HepG2 (cell line): ENCODE measurements at regions of chr2 and their contacts with region 1.

Region 1: GRCh38 chr2:53265544-53266299 is 501.9 kb upstream of the CHAC2 start:
- DNase-seq: no peak
- ATAC-seq: no peak
- H3K4me3 ChIP-seq: no peak overlapping the region
- H3K27ac ChIP-seq: no peak overlapping the region
- H3K4me1 ChIP-seq: no peaks in the 10 kb centered on the region
- H3K27me3 ChIP-seq: peaks cover 0 to 1% of the 10 kb centered on the region in 2 experiments; a peak in 1 of 5 replicates
- CTCF ChIP-seq: no peak
- EP300 ChIP-seq: no peak
- POLR2A ChIP-seq: no peak
- RAD21 ChIP-seq: no peak

Region 2: DNA sequence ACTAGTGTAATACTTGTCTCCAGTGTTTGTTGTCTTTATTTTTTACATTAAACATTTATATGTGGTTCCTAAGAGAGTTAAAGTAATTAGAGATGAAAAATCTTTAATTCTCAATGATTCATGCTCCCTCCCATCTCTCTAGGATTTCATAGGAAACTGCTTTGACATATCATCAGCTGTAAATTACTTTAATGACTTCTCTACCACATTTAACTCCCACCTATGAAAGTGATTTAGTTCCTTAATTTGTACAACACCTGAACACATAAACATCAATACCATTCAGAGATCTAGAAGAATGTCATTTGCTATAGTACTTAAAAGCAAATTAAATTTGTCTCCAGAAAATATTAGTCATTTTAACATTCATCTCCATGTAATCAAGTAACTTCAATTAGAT is 22.3 kb before region 1 on chr2:
- CTCF ChIA-PET with region 1: no interaction called
- POLR2A ChIA-PET with region 1: no interaction called
- in situ Hi-C with region 1: no loop called
- intact Hi-C with region 1: loop called (anchors 1 kb)
- DNase-seq: no peak
- ATAC-seq: no peak
- H3K4me3 ChIP-seq: no peak overlapping the region
- H3K27ac ChIP-seq: no peak overlapping the region
- H3K4me1 ChIP-seq: no peaks in the 10 kb centered on the region
- H3K27me3 ChIP-seq: no peaks in the 10 kb centered on the region
- CTCF ChIP-seq: no peak
- EP300 ChIP-seq: no peak
- POLR2A ChIP-seq: no peak
- RAD21 ChIP-seq: no peak

Region 3: DNA sequence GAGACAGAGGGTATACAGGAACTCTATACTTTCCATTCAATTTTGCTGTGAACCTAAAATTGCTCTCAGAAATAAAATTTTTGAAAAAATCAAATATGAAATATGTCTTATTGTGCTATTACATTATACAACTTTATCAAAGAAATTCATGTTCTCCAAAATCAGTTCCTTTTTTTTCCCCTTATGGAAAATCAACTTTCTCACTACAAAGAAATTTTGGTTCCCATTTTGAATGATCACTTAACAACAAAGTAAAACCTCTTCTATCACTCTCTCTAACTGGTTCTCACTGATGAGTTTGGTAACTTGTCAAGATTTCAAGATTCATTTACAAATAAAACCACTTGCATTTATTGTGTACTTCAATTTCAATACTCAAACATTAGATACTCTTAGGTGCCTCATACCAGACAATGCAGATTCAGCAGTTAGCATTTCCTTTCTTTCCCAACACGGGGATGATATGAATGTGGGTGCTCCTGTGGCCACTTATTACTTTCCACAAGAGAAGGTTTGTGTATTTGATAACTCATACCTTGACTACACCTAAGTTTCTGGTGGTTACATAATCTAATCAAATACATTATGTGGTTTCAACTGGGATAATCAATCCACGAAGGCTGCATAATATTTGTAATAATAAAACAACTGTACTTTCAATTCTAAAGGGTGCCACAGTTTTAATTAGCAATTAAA is 698.7 kb after region 1 on chr2:
- CTCF ChIA-PET with region 1: no interaction called
- POLR2A ChIA-PET with region 1: no interaction called
- in situ Hi-C with region 1: no loop called
- intact Hi-C with region 1: no loop called
- DNase-seq: no peak
- ATAC-seq: no peak
- H3K4me3 ChIP-seq: no peak overlapping the region
- H3K27ac ChIP-seq: peak overlapping the region; percentile 5
- H3K4me1 ChIP-seq: peaks cover 70% of the 10 kb centered on the region
- H3K27me3 ChIP-seq: no peaks in the 10 kb centered on the region
- CTCF ChIP-seq: no peak
- EP300 ChIP-seq: no peak
- POLR2A ChIP-seq: no peak
- RAD21 ChIP-seq: no peak